ENCODE measurements at regions of chr9 and their contacts with region 1.

Region 1: DNA sequence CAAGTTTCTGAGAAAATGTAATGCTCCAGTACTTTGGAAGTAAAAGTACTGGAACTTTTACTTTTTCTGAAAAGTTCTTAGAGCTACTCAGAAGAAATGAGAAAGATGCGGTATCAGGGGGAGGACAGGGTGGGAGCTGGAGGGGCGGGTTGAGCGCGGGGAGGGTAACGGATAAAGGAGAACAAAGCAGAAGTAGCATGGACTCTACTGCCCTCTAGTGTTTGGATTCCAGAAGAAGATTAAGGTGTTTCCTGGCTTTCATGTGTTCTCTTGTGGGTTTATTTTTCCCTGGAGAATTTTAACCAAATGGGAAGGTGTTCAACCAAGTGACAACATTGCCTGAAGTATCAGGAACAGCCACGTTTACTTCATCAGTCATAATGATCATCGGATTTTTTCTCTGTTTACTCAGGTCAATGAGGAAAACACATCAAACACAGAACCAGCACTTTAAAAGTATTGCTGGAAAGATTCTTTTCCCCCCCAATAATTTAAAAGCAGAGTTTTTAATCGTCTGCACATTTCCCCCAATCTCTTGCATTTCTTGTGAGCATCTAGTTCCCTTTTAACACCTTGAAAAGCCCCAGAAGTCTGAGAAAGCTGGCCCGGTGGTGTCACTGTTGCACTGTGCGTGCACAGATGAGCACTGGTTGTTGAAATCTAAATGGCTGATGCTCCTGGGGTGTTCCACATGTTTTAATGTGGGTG is 190.6 kb downstream of the MPDZ start:
- DNase-seq: peak in 1 of 2 experiments; percentile 10
- H3K4me3 ChIP-seq: peak overlapping the region in 1 of 4 experiments; percentile 16; a peak in 1 of 8 replicates
- H3K27ac ChIP-seq: no peak overlapping the region
- H3K4me1 ChIP-seq: no peaks in the 10 kb centered on the region; a peak in 1 of 7 replicates
- H3K27me3 ChIP-seq: no peaks in the 10 kb centered on the region
- CTCF ChIP-seq: peak; percentile 15 to 65 (median 60)
- EP300 ChIP-seq: no peak
- POLR2A ChIP-seq: no peak
- RAD21 ChIP-seq: peak; percentile 81

Region 2: GRCh38 chr9:12719431-12719830 is 369.4 kb before region 1 on chr9:
- CTCF ChIA-PET with region 1: interaction called, 15 read pairs
- POLR2A ChIA-PET with region 1: no interaction called
- DNase-seq: no peak
- H3K4me3 ChIP-seq: peak overlapping the region in 1 of 4 experiments; percentile 47; a peak in 1 of 8 replicates
- H3K27ac ChIP-seq: no peak overlapping the region
- H3K4me1 ChIP-seq: peaks cover 0 to 8% (median 3%) of the 10 kb centered on the region in 4 experiments; a peak in 4 of 7 replicates
- H3K27me3 ChIP-seq: no peaks in the 10 kb centered on the region
- CTCF ChIP-seq: peak in 2 of 3 experiments; percentile 15 to 34; a peak in 2 of 4 replicates
- EP300 ChIP-seq: no peak
- POLR2A ChIP-seq: no peak
- RAD21 ChIP-seq: peak; percentile 51 to 67

Region 3: GRCh38 chr9:13033959-13034693 is 54.7 kb before region 1 on chr9:
- CTCF ChIA-PET with region 1: interaction called, 49 read pairs
- POLR2A ChIA-PET with region 1: interaction called, 3 read pairs
- DNase-seq: peak; percentile 49 to 84
- H3K4me3 ChIP-seq: no peak overlapping the region
- H3K27ac ChIP-seq: no peak overlapping the region
- H3K4me1 ChIP-seq: no peaks in the 10 kb centered on the region
- H3K27me3 ChIP-seq: no peaks in the 10 kb centered on the region
- CTCF ChIP-seq: peak; percentile 77 to 85 (median 84)
- EP300 ChIP-seq: no peak
- POLR2A ChIP-seq: no peak
- RAD21 ChIP-seq: peak; percentile 92 to 97

Region 4: DNA sequence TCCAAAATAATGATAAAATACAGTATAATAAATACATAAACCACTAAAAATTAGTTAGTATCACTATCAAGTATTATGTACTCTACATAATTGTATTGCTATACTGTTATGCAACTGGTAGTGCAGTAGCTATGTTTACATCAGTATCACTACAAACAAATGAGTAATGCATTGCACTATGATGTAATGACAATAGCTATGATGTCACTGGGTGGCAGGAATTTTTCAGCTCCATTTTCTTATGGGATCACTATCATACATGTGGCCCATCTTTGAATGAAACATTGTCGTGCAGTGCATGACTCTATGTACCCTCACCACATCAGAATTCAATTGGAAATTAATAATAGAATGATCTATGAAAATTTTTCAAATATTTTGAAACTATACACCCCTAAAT is 10.7 kb before region 1 on chr9:
- CTCF ChIA-PET with region 1: interaction called, 12 read pairs
- POLR2A ChIA-PET with region 1: no interaction called
- DNase-seq: no peak
- H3K4me3 ChIP-seq: no peak overlapping the region
- H3K27ac ChIP-seq: no peak overlapping the region
- H3K4me1 ChIP-seq: no peaks in the 10 kb centered on the region
- H3K27me3 ChIP-seq: no peaks in the 10 kb centered on the region
- CTCF ChIP-seq: no peak
- EP300 ChIP-seq: no peak
- POLR2A ChIP-seq: no peak
- RAD21 ChIP-seq: no peak

Region 5: GRCh38 chr9:13100914-13101572 is 12.2 kb after region 1 on chr9:
- CTCF ChIA-PET with region 1: interaction called, 15 read pairs
- POLR2A ChIA-PET with region 1: no interaction called
- DNase-seq: no peak
- H3K4me3 ChIP-seq: no peak overlapping the region
- H3K27ac ChIP-seq: no peak overlapping the region
- H3K4me1 ChIP-seq: no peaks in the 10 kb centered on the region
- H3K27me3 ChIP-seq: no peaks in the 10 kb centered on the region
- CTCF ChIP-seq: no peak
- EP300 ChIP-seq: no peak
- POLR2A ChIP-seq: no peak
- RAD21 ChIP-seq: no peak